Common myeloid progenitor, CD34-positive (primary cell): ENCODE measurements at regions of chr3 and their contacts with region 1.

Region 1: DNA sequence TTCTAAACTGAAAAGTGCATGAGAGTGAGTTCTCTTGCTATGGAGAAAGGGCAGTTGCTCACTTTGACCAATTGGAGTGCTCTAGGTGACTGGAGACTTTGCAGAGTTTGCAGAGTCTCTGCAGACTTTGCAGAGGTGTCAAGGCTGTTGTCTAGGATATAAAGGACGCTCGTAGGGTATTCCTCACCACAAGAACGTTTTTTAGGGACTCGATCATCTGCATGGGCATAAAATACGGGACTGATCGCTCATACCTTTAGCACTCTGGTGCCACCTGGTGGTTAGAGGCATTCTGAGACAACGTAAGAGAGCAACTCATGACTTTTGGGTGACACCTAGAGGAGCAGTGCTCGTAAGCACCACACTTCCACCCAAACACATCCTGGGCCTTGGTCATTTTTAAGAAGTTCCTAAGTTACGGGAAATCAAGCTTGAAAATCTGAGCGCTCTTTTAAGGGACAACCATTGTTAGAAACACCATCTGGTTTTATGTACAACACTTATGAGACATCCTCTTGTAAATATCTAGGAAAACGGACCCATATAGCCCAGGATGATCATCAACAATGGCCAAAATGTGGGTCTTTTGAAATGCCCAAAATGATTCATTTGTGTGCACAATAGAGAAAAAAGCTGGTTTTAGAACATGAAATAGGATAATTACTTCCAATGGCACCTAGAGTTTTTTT is 51.6 kb upstream of the XCR1 start:
- DNase-seq: peak; percentile 91 to 95 (median 92)
- H3K4me3 ChIP-seq: peak overlapping the region in 4 of 7 experiments; percentile 32 to 59 (median 48)
- H3K27ac ChIP-seq: no peak overlapping the region
- H3K4me1 ChIP-seq: peaks cover 0 to 2% (median 0%) of the 10 kb centered on the region in 4 experiments
- H3K27me3 ChIP-seq: no peaks in the 10 kb centered on the region

Region 2: DNA sequence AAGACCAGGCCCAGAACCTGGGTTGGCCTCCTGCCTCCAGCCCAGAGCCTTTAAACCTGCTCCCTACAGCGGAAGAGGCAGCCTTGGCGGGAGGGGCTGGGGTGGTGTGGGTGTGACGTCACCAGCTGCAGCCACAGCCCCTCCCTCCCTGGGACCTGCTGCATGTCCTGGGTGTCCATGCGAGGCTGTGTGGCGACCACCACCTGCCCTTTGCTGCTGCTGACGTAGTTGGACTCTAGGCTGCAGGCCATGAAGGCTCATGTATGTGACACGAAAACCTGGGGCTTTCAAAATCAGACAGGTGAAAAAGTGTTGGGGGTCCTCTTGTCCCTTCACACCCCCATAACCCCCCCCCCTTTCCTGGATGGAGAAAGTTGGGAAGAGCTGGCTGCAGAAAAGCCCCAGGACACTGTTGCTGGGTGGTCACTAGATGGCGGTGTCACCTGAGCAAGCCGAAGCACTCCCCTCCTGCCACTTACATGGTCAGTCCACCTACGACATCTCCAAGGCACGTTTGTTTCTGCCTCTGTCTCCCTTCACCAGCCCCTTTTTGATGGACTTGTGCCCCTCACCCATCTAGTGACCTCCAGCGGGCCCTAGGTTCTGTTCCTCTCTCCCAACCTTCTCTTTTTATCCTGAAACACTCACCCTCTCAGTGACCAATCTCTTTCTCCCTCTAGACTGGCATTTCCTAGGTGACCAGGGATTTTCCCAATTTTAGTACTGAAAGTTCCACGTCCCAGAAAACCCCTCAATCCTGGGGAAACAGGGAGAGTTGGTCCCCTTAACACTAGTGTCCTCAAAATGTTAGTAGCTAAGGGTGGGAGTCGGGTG is 317.8 kb before region 1 on chr3:
- CTCF ChIA-PET with region 1: interaction called, 15 read pairs
- POLR2A ChIA-PET with region 1: no interaction called
- DNase-seq: peak; percentile 47 to 69 (median 65)
- H3K4me3 ChIP-seq: no peak overlapping the region
- H3K27ac ChIP-seq: no peak overlapping the region
- H3K4me1 ChIP-seq: no peaks in the 10 kb centered on the region
- H3K27me3 ChIP-seq: peaks cover 0 to 3% (median 0%) of the 10 kb centered on the region in 5 experiments

Region 3: DNA sequence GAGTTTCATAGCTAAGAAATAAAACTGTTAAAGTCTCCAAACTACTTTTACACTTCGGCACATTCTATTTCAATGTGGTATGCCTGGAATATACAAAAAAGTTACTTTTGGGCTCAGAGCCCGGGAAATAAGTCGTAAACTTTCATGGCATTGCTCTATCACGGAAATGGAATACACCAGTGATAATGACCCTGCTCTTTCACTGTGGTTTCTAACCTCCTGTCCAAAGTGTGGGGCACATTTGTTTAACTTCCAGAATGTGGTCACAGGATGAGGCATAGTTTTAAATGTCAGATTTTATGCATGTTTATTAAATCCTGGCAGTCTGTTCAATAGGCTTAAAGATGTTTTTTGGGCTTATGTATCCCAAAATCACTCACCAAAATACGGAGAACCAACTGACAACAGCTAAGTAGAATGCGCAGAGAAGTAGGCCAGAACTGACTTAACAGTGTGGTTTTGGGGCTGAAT is 130.5 kb before region 1 on chr3:
- CTCF ChIA-PET with region 1: interaction called, 212 read pairs
- POLR2A ChIA-PET with region 1: no interaction called
- DNase-seq: peak; percentile 18 to 86 (median 62)
- H3K4me3 ChIP-seq: peak overlapping the region in 1 of 7 experiments; percentile 10
- H3K27ac ChIP-seq: no peak overlapping the region
- H3K4me1 ChIP-seq: peaks cover 0 to 36% (median 14%) of the 10 kb centered on the region in 4 experiments
- H3K27me3 ChIP-seq: no peaks in the 10 kb centered on the region

Region 4: DNA sequence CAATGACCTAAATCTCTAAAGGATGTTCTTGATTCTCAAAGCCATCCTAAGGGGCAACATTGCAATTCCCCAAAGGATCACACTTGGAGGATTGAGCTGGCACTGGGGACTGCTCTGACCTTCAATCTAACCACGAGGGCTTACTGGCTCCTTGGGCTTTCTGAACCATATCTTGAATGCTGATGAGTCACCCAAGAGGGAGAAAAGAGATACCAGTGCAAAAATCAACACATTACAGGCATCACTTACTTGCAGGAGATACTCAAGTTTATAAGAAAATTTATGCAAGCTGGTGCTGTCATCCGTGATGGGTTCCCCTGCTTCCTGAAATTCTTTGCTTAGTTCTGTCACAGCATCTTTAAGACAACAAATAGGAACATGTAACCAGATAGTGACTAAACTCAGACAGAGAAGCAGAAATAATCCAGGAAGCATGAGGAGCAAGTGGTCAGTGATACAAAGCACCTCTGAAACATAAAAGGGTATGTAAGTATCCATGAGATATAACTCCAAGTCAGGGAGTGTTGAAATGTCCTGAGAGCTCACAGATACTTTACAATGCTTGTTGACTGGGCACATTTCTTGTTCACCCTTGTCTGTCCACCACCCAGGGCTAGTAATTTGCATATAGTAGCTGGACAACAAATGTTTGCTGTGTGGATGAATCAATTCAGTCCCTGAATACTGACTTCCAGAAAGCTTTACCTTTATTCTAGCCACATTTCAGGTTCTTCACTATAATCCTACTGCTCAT is 97.4 kb before region 1 on chr3:
- CTCF ChIA-PET with region 1: interaction called, 20 read pairs
- POLR2A ChIA-PET with region 1: no interaction called
- DNase-seq: no peak
- H3K4me3 ChIP-seq: no peak overlapping the region
- H3K27ac ChIP-seq: no peak overlapping the region
- H3K4me1 ChIP-seq: peaks cover 2 to 11% (median 4%) of the 10 kb centered on the region in 4 experiments
- H3K27me3 ChIP-seq: no peaks in the 10 kb centered on the region

Region 5: GRCh38 chr3:46089237-46090011 is 10.6 kb after region 1 on chr3:
- CTCF ChIA-PET with region 1: interaction called, 54 read pairs
- POLR2A ChIA-PET with region 1: no interaction called
- DNase-seq: peak in 2 of 3 donors; percentile 73 to 79
- H3K4me3 ChIP-seq: no peak overlapping the region
- H3K27ac ChIP-seq: no peak overlapping the region
- H3K4me1 ChIP-seq: peaks cover 12 to 56% (median 26%) of the 10 kb centered on the region in 4 experiments
- H3K27me3 ChIP-seq: no peaks in the 10 kb centered on the region

Region 6: GRCh38 chr3:46123667-46124593 is 45.1 kb after region 1 on chr3:
- CTCF ChIA-PET with region 1: no interaction called
- POLR2A ChIA-PET with region 1: no interaction called
- DNase-seq: peak in 1 of 3 donors; percentile 24
- H3K4me3 ChIP-seq: no peak overlapping the region
- H3K27ac ChIP-seq: no peak overlapping the region
- H3K4me1 ChIP-seq: peaks cover 0 to 10% (median 2%) of the 10 kb centered on the region in 4 experiments
- H3K27me3 ChIP-seq: no peaks in the 10 kb centered on the region

Region 7: GRCh38 chr3:46378426-46378942 is 299.6 kb after region 1 on chr3:
- CTCF ChIA-PET with region 1: interaction called, 231 read pairs
- POLR2A ChIA-PET with region 1: no interaction called
- DNase-seq: peak; percentile 64 to 83 (median 77)
- H3K4me3 ChIP-seq: peak overlapping the region in 1 of 7 experiments; percentile 6
- H3K27ac ChIP-seq: no peak overlapping the region
- H3K4me1 ChIP-seq: peaks cover 9 to 58% (median 39%) of the 10 kb centered on the region in 4 experiments
- H3K27me3 ChIP-seq: no peaks in the 10 kb centered on the region